PC-9 (cell line): ENCODE measurements at regions of chr9 and their contacts with region 1.

Region 1: GRCh38 chr9:3732077-3733038 is 206.6 kb upstream of the RFX3 start:
- DNase-seq: peak; percentile 48 to 65
- H3K4me3 ChIP-seq: no peak overlapping the region
- H3K27ac ChIP-seq: no peak overlapping the region
- H3K4me1 ChIP-seq: peaks cover 9% of the 10 kb centered on the region; the same call in 1 of the 2 replicates
- H3K27me3 ChIP-seq: no peaks in the 10 kb centered on the region
- CTCF ChIP-seq: peak; percentile 73

Region 2: GRCh38 chr9:3398232-3398648 is 334.1 kb before region 1 on chr9:
- CTCF ChIA-PET with region 1: no interaction called
- POLR2A ChIA-PET with region 1: no interaction called
- intact Hi-C with region 1: no loop called
- DNase-seq: no peak
- H3K4me3 ChIP-seq: no peak overlapping the region
- H3K27ac ChIP-seq: no peak overlapping the region
- H3K4me1 ChIP-seq: no peaks in the 10 kb centered on the region
- H3K27me3 ChIP-seq: no peaks in the 10 kb centered on the region
- CTCF ChIP-seq: no peak

Region 3: DNA sequence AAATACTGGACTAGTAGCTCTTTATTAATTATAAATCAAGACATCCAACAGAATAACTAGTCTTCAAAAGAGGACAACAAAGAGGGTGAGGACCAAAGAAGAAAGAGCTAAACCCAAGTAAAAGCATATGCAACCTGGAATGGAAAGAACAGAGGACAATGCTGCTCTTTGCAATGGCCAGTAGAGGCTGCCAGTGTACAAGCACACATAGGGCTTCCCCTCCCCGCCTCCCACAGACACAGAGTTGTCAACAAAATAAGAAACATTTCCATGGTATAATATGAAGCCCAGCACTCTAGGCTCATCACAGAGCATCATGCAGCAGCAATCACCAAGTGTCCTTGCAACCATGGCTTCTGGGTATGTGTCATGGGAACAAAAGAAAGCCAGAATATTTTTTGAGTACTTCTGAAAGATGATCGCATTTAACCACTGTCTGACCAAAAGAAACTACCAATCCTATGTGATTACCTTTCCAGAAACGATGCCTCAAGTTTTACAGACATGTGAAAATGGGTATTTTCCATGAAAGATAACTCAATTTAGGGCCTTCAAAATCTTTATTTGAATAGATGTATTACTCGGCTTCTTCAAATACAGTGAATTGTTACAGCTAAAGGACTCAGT is 264.7 kb before region 1 on chr9:
- CTCF ChIA-PET with region 1: no interaction called
- POLR2A ChIA-PET with region 1: no interaction called
- intact Hi-C with region 1: loop called (anchors 5 kb)
- DNase-seq: peak in 1 of 2 experiments; percentile 19
- H3K4me3 ChIP-seq: no peak overlapping the region
- H3K27ac ChIP-seq: no peak overlapping the region
- H3K4me1 ChIP-seq: no peaks in the 10 kb centered on the region
- H3K27me3 ChIP-seq: no peaks in the 10 kb centered on the region
- CTCF ChIP-seq: peak; percentile 63

Region 4: GRCh38 chr9:3647652-3648051 is 84.7 kb before region 1 on chr9:
- CTCF ChIA-PET with region 1: no interaction called
- POLR2A ChIA-PET with region 1: no interaction called
- intact Hi-C with region 1: no loop called
- DNase-seq: no peak
- H3K4me3 ChIP-seq: no peak overlapping the region
- H3K27ac ChIP-seq: no peak overlapping the region
- H3K4me1 ChIP-seq: no peaks in the 10 kb centered on the region
- H3K27me3 ChIP-seq: no peaks in the 10 kb centered on the region
- CTCF ChIP-seq: no peak

Region 5: GRCh38 chr9:3848445-3849114 is 116.2 kb after region 1 on chr9:
- CTCF ChIA-PET with region 1: no interaction called
- POLR2A ChIA-PET with region 1: no interaction called
- intact Hi-C with region 1: loop called (anchors 5 kb)
- DNase-seq: peak in 1 of 2 experiments; percentile 46
- H3K4me3 ChIP-seq: no peak overlapping the region
- H3K27ac ChIP-seq: no peak overlapping the region
- H3K4me1 ChIP-seq: no peaks in the 10 kb centered on the region; the same call in 1 of the 2 replicates
- H3K27me3 ChIP-seq: no peaks in the 10 kb centered on the region
- CTCF ChIP-seq: no peak

Region 6: GRCh38 chr9:3906432-3907213 is 174.3 kb after region 1 on chr9:
- CTCF ChIA-PET with region 1: no interaction called
- POLR2A ChIA-PET with region 1: no interaction called
- intact Hi-C with region 1: loop called (anchors 2 kb)
- DNase-seq: peak; percentile 40 to 63
- H3K4me3 ChIP-seq: no peak overlapping the region
- H3K27ac ChIP-seq: peak overlapping the region; percentile 47
- H3K4me1 ChIP-seq: peaks cover 10% of the 10 kb centered on the region
- H3K27me3 ChIP-seq: no peaks in the 10 kb centered on the region
- CTCF ChIP-seq: no peak

Region 7: GRCh38 chr9:4038182-4038723 is 305.9 kb after region 1 on chr9:
- CTCF ChIA-PET with region 1: no interaction called
- POLR2A ChIA-PET with region 1: no interaction called
- intact Hi-C with region 1: loop called (anchors 5 kb)
- DNase-seq: peak in 1 of 2 experiments; percentile 82
- H3K4me3 ChIP-seq: no peak overlapping the region
- H3K27ac ChIP-seq: peak overlapping the region; percentile 69
- H3K4me1 ChIP-seq: peaks cover 29% of the 10 kb centered on the region
- H3K27me3 ChIP-seq: no peaks in the 10 kb centered on the region
- CTCF ChIP-seq: no peak

Region 8: DNA sequence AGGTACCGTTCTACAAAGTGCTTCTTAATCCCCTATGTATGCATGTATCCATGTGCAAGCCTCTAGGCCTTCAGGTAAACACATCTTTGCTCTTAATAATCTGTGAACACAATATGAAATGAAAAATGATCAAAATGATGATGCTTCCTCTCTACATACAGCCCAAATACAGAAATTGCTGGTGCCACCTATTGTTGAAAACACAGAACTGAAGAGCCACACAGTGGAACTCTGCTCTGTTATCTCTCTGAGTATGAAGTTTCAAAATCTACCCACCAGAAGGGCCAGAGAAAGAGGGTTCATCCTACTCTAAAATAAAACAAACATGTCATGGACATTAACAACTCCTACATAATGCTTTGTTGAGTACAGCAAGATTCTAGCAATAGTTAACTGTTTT is 496.2 kb after region 1 on chr9:
- CTCF ChIA-PET with region 1: no interaction called
- POLR2A ChIA-PET with region 1: no interaction called
- intact Hi-C with region 1: loop called (anchors 2 kb)
- DNase-seq: no peak
- H3K4me3 ChIP-seq: no peak overlapping the region
- H3K27ac ChIP-seq: no peak overlapping the region
- H3K4me1 ChIP-seq: peaks cover 13% of the 10 kb centered on the region; the same call in 1 of the 2 replicates
- H3K27me3 ChIP-seq: no peaks in the 10 kb centered on the region
- CTCF ChIP-seq: peak; percentile 55

Region 9: GRCh38 chr9:4366591-4367330 is 634.4 kb after region 1 on chr9:
- CTCF ChIA-PET with region 1: no interaction called
- POLR2A ChIA-PET with region 1: interaction called, 6 read pairs
- intact Hi-C with region 1: loop called (anchors 1 kb)
- DNase-seq: peak in 1 of 2 experiments; percentile 43
- H3K4me3 ChIP-seq: no peak overlapping the region
- H3K27ac ChIP-seq: no peak overlapping the region
- H3K4me1 ChIP-seq: no peaks in the 10 kb centered on the region
- H3K27me3 ChIP-seq: no peaks in the 10 kb centered on the region
- CTCF ChIP-seq: peak; percentile 79